ENCODE measurements at regions of chr20 and their contacts with region 1.

Region 1: DNA sequence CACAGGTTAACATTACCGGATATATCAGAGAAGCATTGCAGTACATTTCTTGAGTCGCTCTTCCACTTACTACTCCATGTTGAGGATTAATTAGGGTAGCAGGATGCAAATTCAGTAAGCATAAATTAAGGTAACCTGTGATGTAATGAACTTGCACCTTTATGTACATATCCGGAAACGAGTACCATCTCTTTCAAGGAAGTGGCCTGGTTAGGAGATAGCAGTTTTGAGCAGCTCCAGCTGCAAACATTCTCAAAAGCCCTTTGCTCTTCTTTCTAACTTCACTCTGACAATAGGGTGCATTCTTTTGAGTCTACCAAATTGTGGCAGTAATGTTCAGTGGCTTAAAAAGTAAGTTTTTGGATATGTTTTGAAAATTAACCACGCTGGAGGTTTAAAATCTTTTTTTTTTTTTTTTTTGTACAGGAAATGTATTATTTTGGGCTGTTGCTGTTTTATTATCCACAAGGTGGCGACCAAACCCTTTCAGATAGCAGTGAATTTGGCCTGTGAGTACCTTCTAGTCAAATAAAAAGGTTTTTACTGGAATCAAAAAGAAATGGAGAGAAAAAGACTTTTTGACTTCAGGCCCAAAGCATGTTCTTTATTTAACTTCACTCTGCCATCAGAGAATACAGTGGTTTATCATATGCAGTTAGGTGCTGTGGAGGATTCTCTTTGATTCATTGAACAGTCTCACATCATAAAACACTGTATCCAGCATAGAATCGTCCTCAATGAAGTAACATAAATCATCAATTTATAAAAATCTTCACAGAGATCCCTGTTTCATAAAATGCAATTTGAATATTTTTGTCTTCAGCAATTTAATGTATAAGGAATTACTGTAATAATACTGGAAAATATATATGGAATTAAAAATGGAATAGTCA is 8.9 kb downstream of the FAM217B start:
- DNase-seq: peak; percentile 27
- H3K4me3 Mint-ChIP-seq: no peak overlapping the region
- H3K27ac Mint-ChIP-seq: peak overlapping the region; percentile 83
- H3K4me1 Mint-ChIP-seq: peaks cover 26% of the 10 kb centered on the region
- H3K27me3 Mint-ChIP-seq: no peaks in the 10 kb centered on the region

Region 2: GRCh38 chr20:59873409-59873808 is 75.7 kb before region 1 on chr20:
- CTCF ChIA-PET with region 1: no interaction called
- POLR2A ChIA-PET with region 1: no interaction called
- intact Hi-C with region 1: no loop called
- DNase-seq: no peak
- H3K4me3 Mint-ChIP-seq: no peak overlapping the region
- H3K27ac Mint-ChIP-seq: no peak overlapping the region
- H3K4me1 Mint-ChIP-seq: no peaks in the 10 kb centered on the region
- H3K27me3 Mint-ChIP-seq: no peaks in the 10 kb centered on the region

Region 3: GRCh38 chr20:59920944-59921343 is 28.1 kb before region 1 on chr20:
- CTCF ChIA-PET with region 1: no interaction called
- POLR2A ChIA-PET with region 1: no interaction called
- intact Hi-C with region 1: no loop called
- DNase-seq: no peak
- H3K4me3 Mint-ChIP-seq: no peak overlapping the region
- H3K27ac Mint-ChIP-seq: no peak overlapping the region
- H3K4me1 Mint-ChIP-seq: no peaks in the 10 kb centered on the region
- H3K27me3 Mint-ChIP-seq: no peaks in the 10 kb centered on the region

Region 4: GRCh38 chr20:59933849-59934596 is 15.1 kb before region 1 on chr20:
- CTCF ChIA-PET with region 1: interaction called, 66 read pairs
- POLR2A ChIA-PET with region 1: interaction called, 3 read pairs
- intact Hi-C with region 1: no loop called
- DNase-seq: peak; percentile 84
- H3K4me3 Mint-ChIP-seq: peak overlapping the region; percentile 69
- H3K27ac Mint-ChIP-seq: peak overlapping the region; percentile 42
- H3K4me1 Mint-ChIP-seq: peaks cover 31% of the 10 kb centered on the region
- H3K27me3 Mint-ChIP-seq: no peaks in the 10 kb centered on the region

Region 5: DNA sequence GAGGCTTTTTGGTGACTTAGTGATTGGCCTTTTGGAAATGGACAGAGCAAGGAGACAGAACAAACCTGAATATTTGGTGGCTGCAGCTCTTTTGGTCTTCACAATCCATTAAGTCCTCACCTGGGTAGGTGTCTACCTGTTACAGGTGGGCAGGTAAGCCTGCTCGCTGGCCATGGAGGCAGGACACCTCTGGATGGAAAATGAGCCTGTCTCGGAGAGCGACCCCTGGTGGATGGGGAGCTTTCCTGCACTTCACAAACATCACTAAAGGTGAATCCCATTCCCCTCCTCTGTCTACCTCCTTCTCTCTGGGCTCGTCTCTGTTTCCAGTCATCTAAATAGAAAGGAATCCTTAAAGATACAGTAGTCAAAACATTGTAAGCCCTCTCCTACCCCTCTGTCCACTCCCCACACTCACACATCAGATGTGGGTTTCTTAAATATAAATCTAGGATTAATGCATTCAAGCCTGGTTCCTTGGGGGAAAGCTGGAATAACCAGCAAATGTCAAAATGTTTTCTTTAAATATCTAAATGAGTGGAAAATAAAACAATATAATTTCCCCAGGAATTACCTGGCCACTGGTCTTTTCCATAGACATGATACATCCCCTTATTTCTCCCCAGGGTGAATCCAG is 314.0 kb after region 1 on chr20:
- CTCF ChIA-PET with region 1: interaction called, 4 read pairs
- POLR2A ChIA-PET with region 1: no interaction called
- intact Hi-C with region 1: loop called (anchors 5 kb)
- DNase-seq: peak; percentile 66
- H3K4me3 Mint-ChIP-seq: no peak overlapping the region
- H3K27ac Mint-ChIP-seq: no peak overlapping the region
- H3K4me1 Mint-ChIP-seq: peaks cover 14% of the 10 kb centered on the region
- H3K27me3 Mint-ChIP-seq: no peaks in the 10 kb centered on the region

Region 6: DNA sequence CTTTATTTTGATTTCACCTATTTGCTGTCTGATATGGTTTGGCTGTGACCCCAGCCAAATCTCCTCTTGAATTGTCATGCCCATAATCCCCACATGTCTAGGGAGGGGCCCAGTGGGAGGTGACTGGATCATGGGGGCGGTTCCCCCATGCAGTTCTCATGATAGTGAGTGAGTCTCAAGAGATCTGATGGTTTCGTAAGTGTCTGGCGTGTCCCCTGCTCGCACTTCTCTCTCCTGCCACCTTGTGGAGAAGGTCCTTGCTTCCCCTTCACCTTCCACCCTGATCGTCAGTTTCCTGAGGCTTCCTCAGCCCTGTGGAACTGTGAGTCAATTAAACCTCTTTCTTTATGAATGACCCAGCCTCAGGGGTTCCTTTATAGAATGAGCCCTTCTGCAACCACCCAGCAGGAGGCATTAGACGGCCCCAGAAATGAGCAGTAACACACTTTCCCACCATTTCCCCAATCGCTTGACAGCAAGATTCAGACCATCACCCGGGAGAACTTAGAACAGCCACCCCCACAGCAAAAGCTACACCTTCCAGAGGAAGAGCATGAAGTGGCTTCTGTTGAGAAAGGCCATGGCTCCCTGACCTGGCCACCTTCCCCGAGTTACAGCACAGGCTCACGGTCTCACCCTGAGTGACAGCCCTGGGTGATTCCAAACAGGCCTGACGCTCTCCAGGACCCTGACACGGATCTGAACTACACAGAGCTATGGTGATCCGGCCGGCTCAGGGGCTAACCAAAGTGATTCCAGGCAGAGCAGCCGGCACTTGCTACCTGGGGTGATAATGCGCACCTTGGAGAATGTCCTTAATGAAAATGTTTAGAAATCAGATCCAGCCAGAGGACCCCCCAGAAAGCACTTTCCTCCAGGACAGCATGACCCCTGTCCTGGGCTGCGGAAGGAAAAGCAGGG is 1171.8 kb after region 1 on chr20:
- CTCF ChIA-PET with region 1: no interaction called
- POLR2A ChIA-PET with region 1: no interaction called
- intact Hi-C with region 1: loop called (anchors 5 kb)
- DNase-seq: peak; percentile 46
- H3K4me3 Mint-ChIP-seq: no peak overlapping the region
- H3K27ac Mint-ChIP-seq: no peak overlapping the region
- H3K4me1 Mint-ChIP-seq: no peaks in the 10 kb centered on the region
- H3K27me3 Mint-ChIP-seq: no peaks in the 10 kb centered on the region